Activated CD4-positive, alpha-beta T cell treated with anti-CD3 and anti-CD28 coated beads for 36 hours (primary cell): ENCODE measurements at regions of chr12 and their contacts with region 1.

Region 1: DNA sequence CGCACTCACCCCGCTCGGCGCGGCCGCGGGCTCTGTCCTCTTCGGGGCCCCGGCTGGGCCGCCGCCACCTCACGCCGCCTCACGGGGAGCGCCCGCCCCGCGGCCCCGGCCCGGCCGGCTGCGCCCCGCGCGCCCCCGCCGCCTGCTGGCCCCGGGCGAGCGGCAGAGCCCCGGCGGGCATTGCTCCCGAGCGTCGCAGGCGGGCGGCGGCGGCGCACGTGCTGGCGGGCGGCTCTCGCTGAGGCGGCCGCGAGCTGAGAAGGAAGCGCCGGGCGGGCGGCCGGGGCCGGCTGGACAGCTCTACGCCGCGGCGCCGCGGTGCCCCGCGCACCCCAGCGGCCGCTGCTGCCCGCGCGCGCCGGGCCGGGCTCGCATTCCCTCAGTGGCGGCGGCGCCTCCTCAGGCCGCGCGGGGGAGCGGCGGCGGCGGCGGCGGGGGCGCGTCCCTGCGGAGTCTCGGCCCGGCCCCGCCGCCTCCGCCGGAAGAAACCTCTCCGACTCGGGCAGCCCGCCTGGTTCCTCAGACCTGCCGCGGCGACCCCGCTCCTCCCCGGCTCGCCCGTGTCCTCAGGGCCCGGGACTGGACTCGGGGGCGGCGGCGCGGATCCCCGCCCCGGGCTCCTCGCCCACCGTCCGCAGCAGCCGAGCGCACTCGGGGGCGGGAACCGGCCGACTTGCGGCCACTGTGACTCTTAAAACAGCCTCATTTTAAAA is at the start of gene PITPNM2:
- DNase-seq: peak; percentile 73
- ATAC-seq: peak; percentile 84
- H3K4me3 Mint-ChIP-seq: peak within 1 kb of the TSS; percentile 74
- H3K27ac Mint-ChIP-seq: peak within 1 kb of the TSS; percentile 85
- H3K4me1 Mint-ChIP-seq: peaks cover 28% of the 10 kb centered on the region
- H3K27me3 Mint-ChIP-seq: no peaks in the 10 kb centered on the region
- total RNA-seq, gene PITPNM2: 8.3 to 9.5 TPM

Region 2: DNA sequence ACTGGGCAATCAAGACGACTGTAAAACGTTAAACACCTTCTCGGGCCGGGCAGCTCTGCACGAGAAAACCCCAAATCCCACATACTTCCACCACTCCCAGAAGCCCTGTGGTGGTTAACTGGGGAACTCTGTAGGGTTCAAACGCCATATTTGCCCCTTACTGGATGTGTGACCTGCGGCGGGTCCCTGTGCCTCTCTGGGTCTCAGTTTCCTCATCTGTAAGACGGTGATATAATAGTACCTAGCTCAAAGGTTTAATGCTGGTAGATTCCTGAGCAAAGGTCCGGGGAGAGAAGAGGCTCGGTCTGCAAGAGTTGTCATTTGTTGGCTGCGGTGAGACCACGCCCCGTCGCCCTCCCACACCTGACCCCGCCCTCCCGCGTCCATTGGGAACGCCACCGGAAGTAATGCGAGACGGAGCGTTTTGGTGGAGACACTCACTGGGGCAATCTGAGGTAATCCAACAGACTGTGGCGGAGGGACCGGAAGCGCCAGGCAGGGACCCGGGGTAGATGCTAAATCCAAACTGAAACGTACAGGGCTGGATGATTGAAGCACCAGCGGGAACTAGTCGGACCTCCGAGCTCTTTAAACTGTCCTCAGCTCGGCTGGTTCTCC is 176.5 kb before region 1 on chr12:
- CTCF ChIA-PET with region 1: interaction called, 3 read pairs
- POLR2A ChIA-PET with region 1: no interaction called
- intact Hi-C with region 1: loop called in 1 of 2 experiments (anchors 2 kb)
- DNase-seq: peak; percentile 99
- ATAC-seq: peak; percentile 86
- H3K4me3 Mint-ChIP-seq: peak overlapping the region; percentile 95
- H3K27ac Mint-ChIP-seq: peak overlapping the region; percentile 100
- H3K4me1 Mint-ChIP-seq: peaks cover 21% of the 10 kb centered on the region
- H3K27me3 Mint-ChIP-seq: no peaks in the 10 kb centered on the region

Region 3: DNA sequence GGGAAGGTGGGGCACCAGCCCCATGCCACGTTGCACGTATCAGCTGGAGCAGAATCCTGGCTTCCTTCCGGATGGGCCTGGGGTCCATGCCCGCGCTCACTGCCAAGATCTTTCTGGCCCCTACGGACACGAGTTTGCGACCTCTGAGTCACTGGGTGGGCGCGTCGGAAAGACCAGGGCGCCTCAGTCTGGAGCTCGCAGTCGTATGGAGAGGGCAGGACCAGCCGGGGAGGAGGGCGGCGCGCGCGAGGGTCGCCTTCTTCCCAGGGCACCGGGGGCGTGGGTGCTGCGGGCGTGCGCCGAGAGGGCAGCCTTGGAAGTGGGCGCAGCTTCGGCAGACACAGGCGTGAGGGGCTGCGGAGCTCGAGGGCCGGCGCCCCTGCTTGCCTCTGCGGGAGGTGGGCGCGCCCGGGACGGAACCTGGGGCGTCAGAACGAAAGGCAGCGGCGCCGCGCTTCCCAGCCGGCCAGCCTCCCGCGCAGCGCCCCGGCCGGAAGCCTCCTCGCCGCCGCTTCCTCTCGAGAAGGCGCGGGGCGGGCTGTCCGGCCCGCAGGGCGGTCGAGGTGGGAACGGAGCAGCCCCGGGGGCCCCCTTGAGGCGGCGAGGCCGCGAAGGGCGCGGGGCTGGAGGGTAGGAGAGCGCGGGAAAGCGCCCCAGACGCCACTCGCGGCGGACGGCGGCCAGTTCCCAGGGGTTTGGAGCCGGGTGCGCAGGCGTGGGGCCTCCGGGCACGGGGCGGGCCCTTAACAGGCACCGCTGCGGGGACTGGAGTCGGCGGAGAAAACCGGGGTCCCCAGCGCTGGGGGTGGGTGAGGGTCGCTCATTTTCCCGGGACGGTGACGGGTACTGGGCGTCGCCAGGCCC is 170.5 kb before region 1 on chr12 and contains the start of gene ARL6IP4:
- CTCF ChIA-PET with region 1: interaction called, 3 read pairs
- POLR2A ChIA-PET with region 1: no interaction called
- intact Hi-C with region 1: loop called (anchors 2 to 5 kb)
- DNase-seq: peak; percentile 82
- ATAC-seq: peak; percentile 77
- H3K4me3 Mint-ChIP-seq: peak within 1 kb of the TSS; percentile 87
- H3K27ac Mint-ChIP-seq: peak within 1 kb of the TSS; percentile 85
- H3K4me1 Mint-ChIP-seq: peaks cover 55% of the 10 kb centered on the region
- H3K27me3 Mint-ChIP-seq: no peaks in the 10 kb centered on the region
- total RNA-seq, gene ARL6IP4: 141 to 163 TPM

Region 4: DNA sequence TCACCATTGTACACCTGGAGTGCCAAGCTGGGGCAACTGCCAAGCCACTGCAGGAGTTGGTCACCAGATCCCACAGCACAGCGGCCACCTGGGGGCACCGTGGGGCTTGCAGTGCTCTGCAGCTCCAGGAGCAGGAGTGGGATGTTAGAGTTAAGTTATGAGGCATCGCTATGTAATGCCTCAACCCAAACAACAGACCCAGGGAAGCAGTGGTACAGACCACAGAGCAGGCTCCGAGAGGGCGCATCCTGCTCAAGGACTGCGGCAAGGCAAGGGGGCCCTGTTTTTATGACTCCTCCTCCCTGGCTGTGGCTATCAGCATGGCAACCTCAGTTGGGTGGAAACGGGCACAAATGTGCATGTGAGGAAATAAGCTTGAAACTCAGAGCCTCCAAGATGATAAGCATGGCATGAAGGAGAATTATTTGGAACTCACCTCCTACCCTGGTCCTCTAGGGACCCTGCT is 107.3 kb before region 1 on chr12:
- CTCF ChIA-PET with region 1: interaction called, 7 read pairs
- POLR2A ChIA-PET with region 1: no interaction called
- intact Hi-C with region 1: loop called (anchors 1 to 5 kb)
- DNase-seq: peak; percentile 89
- ATAC-seq: peak; percentile 97
- H3K4me3 Mint-ChIP-seq: no peak overlapping the region
- H3K27ac Mint-ChIP-seq: peak overlapping the region; percentile 47
- H3K4me1 Mint-ChIP-seq: peaks cover 28% of the 10 kb centered on the region
- H3K27me3 Mint-ChIP-seq: no peaks in the 10 kb centered on the region

Region 5: DNA sequence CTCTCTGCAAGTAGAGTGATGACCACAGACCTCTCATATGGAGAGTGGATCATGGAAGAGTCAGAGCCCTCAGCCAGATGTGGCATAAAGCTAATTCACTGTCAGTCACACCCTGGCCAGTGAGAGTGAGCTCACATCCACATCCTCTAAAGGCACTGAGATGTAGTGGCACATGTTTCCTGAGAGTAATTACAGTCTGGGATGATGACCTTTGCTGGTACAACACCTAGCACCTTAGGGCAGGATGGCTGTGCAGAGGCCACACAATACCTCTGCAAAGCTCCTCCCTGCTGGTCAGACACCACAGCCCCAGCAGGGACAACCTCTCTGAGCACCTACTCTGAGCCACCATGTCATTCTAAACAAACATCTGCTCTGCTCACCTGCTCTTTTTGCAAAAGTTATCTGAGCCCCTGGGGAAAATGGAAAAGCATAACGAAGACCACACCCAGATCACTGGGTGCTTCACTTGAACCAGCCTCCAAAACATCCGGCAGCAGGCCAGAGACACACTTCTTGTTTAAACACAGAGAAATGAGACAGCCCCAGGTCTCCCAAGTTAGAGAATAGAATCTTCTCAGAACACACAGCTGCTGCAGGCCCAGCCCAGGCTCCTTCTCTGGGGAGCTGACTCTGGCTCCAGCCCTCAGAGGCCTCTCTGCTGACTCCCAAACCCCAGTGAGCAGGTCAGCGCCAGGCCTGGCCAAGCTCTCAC is 30.3 kb before region 1 on chr12:
- CTCF ChIA-PET with region 1: no interaction called
- POLR2A ChIA-PET with region 1: interaction called, 8 read pairs
- intact Hi-C with region 1: loop called in 1 of 2 experiments (anchors 2 kb)
- DNase-seq: peak; percentile 62
- ATAC-seq: peak; percentile 85
- H3K4me3 Mint-ChIP-seq: no peak overlapping the region
- H3K27ac Mint-ChIP-seq: peak overlapping the region; percentile 85
- H3K4me1 Mint-ChIP-seq: peaks cover 63% of the 10 kb centered on the region
- H3K27me3 Mint-ChIP-seq: no peaks in the 10 kb centered on the region

Region 6: GRCh38 chr12:123160801-123161487 is 10.0 kb after region 1 on chr12:
- CTCF ChIA-PET with region 1: interaction called, 11 read pairs
- POLR2A ChIA-PET with region 1: no interaction called
- intact Hi-C with region 1: no loop called
- DNase-seq: no peak
- ATAC-seq: no peak
- H3K4me3 Mint-ChIP-seq: no peak overlapping the region
- H3K27ac Mint-ChIP-seq: no peak overlapping the region
- H3K4me1 Mint-ChIP-seq: peaks cover 2% of the 10 kb centered on the region
- H3K27me3 Mint-ChIP-seq: no peaks in the 10 kb centered on the region

Region 7: DNA sequence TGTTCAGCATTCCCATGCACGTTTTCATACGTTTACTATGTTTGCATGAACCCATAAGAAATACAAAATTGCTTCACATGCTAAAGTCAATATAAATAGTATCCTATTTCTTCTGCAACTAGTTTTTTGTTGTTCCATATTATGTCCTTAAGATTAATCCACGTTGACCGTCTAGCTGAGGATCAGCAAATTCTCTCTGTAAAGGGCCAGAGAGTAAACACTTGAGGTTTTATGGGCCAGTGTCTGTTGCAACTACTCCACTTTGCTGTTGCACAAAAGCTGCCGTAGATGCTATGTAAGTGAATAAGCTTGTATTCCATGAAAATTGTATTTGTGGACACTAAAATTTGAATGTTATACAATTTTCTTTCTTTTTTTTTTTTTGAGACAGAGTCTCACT is 21.1 kb after region 1 on chr12:
- CTCF ChIA-PET with region 1: no interaction called
- POLR2A ChIA-PET with region 1: no interaction called
- intact Hi-C with region 1: no loop called
- DNase-seq: no peak
- ATAC-seq: no peak
- H3K4me3 Mint-ChIP-seq: no peak overlapping the region
- H3K27ac Mint-ChIP-seq: no peak overlapping the region
- H3K4me1 Mint-ChIP-seq: peaks cover 7% of the 10 kb centered on the region
- H3K27me3 Mint-ChIP-seq: no peaks in the 10 kb centered on the region

Region 8: GRCh38 chr12:123388177-123388947 is 237.5 kb after region 1 on chr12:
- CTCF ChIA-PET with region 1: no interaction called
- POLR2A ChIA-PET with region 1: no interaction called
- intact Hi-C with region 1: no loop called
- DNase-seq: peak; percentile 86
- ATAC-seq: peak; percentile 43
- H3K4me3 Mint-ChIP-seq: peak overlapping the region; percentile 76
- H3K27ac Mint-ChIP-seq: peak overlapping the region; percentile 81
- H3K4me1 Mint-ChIP-seq: peaks cover 35% of the 10 kb centered on the region
- H3K27me3 Mint-ChIP-seq: no peaks in the 10 kb centered on the region